ENCODE measurements at regions of chr3 and their contacts with region 1.

Region 1: DNA sequence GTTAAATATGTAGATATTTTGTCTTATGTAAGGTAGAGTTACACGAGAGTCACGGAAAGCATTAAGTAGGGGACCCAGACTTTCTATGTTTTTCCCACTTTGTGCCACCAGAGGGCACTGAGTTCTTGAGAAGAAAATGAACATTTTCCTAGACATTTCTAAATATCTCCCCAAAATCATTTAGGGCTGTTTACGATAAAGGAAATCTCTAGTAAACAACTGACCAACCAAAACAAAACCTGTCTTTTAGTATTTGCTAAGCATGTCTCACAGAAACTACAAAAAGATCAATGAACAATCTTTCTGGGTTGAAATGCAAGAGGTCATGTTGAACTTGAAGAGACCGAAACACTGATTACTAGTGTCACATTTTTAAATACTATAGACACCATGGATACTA is 16.1 kb downstream of the POU1F1 start:
- DNase-seq: no peak
- ATAC-seq: peak; percentile 74
- H3K4me3 ChIP-seq: no peak overlapping the region
- H3K27ac ChIP-seq: no peak overlapping the region
- H3K4me1 ChIP-seq: no peaks in the 10 kb centered on the region
- H3K27me3 ChIP-seq: no peaks in the 10 kb centered on the region
- CTCF ChIP-seq: peak; percentile 58 to 66 (median 63)
- EP300 ChIP-seq: no peak
- POLR2A ChIP-seq: no peak
- RAD21 ChIP-seq: peak; percentile 50

Region 2: GRCh38 chr3:87227104-87227834 is 33.0 kb before region 1 on chr3 and contains the start of gene CHMP2B:
- CTCF ChIA-PET with region 1: interaction called, 20 read pairs
- POLR2A ChIA-PET with region 1: no interaction called
- RAD21 ChIA-PET with region 1: no interaction called
- SMC1A ChIA-PET with region 1: no interaction called
- in situ Hi-C with region 1: no loop called
- intact Hi-C with region 1: no loop called
- DNase-seq: peak; percentile 51
- ATAC-seq: peak; percentile 96
- H3K4me3 ChIP-seq: peak within 1 kb of the TSS; percentile 87
- H3K27ac ChIP-seq: peak within 1 kb of the TSS; percentile 82
- H3K4me1 ChIP-seq: no peaks in the 10 kb centered on the region; the same call in 1 of the 2 replicates
- H3K27me3 ChIP-seq: no peaks in the 10 kb centered on the region
- CTCF ChIP-seq: no peak
- EP300 ChIP-seq: no peak; a peak in 1 of 4 replicates
- POLR2A ChIP-seq: peak; percentile 85
- RAD21 ChIP-seq: no peak
- polyA plus RNA-seq, gene CHMP2B: 15.7 to 22.5 TPM

Region 3: DNA sequence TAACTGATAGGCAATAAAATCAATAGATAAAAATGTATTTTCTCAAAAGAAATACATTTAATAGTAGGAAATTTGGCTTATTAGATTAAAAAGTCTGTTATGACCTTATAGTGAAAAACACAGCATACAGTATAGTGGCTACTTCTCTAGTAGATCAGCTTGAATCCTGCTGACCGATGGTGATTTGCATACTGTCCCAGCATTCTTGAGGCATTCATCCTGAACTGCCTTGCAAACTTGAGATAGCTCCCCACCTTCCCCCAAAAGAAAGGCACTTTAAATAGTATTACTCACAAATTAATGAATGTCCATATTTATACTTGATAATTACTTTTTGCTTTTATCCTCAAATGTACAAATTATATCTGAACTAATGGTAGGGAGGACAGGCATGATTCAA is 26.5 kb before region 1 on chr3:
- CTCF ChIA-PET with region 1: interaction called, 12 read pairs
- POLR2A ChIA-PET with region 1: no interaction called
- RAD21 ChIA-PET with region 1: no interaction called
- SMC1A ChIA-PET with region 1: interaction called, 6 read pairs
- in situ Hi-C with region 1: no loop called
- intact Hi-C with region 1: no loop called
- DNase-seq: no peak
- ATAC-seq: no peak
- H3K4me3 ChIP-seq: no peak overlapping the region
- H3K27ac ChIP-seq: no peak overlapping the region
- H3K4me1 ChIP-seq: no peaks in the 10 kb centered on the region
- H3K27me3 ChIP-seq: no peaks in the 10 kb centered on the region
- CTCF ChIP-seq: no peak
- EP300 ChIP-seq: no peak
- POLR2A ChIP-seq: no peak
- RAD21 ChIP-seq: no peak

Region 4: GRCh38 chr3:87247430-87247773 is 12.9 kb before region 1 on chr3:
- CTCF ChIA-PET with region 1: interaction called, 20 read pairs
- POLR2A ChIA-PET with region 1: no interaction called
- RAD21 ChIA-PET with region 1: no interaction called
- SMC1A ChIA-PET with region 1: interaction called, 4 read pairs
- in situ Hi-C with region 1: no loop called
- intact Hi-C with region 1: no loop called
- DNase-seq: no peak
- ATAC-seq: no peak
- H3K4me3 ChIP-seq: no peak overlapping the region
- H3K27ac ChIP-seq: no peak overlapping the region
- H3K4me1 ChIP-seq: no peaks in the 10 kb centered on the region
- H3K27me3 ChIP-seq: no peaks in the 10 kb centered on the region
- CTCF ChIP-seq: no peak
- EP300 ChIP-seq: no peak
- POLR2A ChIP-seq: no peak
- RAD21 ChIP-seq: no peak

Region 5: DNA sequence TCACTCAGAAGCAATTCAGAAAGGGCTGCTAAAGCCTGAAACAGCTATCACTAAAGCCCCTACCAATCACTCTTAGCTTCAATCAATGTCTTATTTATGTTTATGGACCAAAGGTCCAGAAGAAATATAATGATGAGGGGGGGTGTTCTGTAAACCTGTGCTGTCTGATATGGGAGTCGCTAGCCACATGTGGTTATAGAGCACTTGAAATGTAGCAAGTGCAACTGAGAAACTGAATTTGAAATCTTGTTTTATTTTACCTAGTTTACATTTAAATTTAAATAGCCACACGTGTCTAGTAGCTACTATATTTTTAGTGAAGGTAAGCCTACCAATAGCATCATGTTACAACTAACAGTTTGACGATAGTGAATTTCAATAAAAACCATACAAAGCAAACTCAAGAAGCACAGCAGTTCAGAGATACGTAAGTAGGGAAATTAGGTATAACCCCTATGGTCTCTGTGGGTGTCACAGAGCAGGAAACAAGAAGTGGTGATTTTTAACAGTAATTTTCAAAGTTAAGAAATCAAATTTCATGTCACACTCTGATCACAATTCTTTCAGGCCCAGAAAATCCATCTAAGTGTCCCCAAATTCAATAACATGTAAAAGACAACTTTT is 12.6 kb after region 1 on chr3:
- CTCF ChIA-PET with region 1: interaction called, 11 read pairs
- POLR2A ChIA-PET with region 1: no interaction called
- RAD21 ChIA-PET with region 1: no interaction called
- SMC1A ChIA-PET with region 1: interaction called, 3 read pairs
- in situ Hi-C with region 1: no loop called
- intact Hi-C with region 1: no loop called
- DNase-seq: no peak
- ATAC-seq: peak; percentile 80
- H3K4me3 ChIP-seq: no peak overlapping the region
- H3K27ac ChIP-seq: no peak overlapping the region
- H3K4me1 ChIP-seq: no peaks in the 10 kb centered on the region
- H3K27me3 ChIP-seq: no peaks in the 10 kb centered on the region
- CTCF ChIP-seq: no peak
- EP300 ChIP-seq: no peak
- POLR2A ChIP-seq: no peak
- RAD21 ChIP-seq: no peak

Region 6: DNA sequence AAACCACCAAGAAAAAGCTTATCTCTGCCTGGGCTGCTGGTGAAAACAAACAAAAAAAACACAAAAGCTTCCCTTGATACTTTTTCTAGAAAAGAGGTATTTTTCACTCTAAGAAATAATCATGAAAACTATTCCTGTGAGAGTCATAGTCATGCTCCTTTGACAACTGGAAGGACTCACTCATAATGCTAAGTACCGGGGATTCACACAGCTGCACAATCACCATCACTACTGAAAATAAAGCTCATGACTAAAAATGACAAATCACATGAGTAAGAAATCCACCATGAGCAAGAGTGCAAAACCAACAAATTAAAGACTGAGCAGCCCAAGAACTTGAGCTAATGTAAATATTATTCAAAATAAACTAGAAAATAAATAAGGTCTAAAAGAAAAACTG is 26.7 kb after region 1 on chr3:
- CTCF ChIA-PET with region 1: interaction called, 10 read pairs
- POLR2A ChIA-PET with region 1: no interaction called
- RAD21 ChIA-PET with region 1: no interaction called
- SMC1A ChIA-PET with region 1: interaction called, 3 read pairs
- in situ Hi-C with region 1: no loop called
- intact Hi-C with region 1: no loop called
- DNase-seq: no peak
- ATAC-seq: peak; percentile 51
- H3K4me3 ChIP-seq: no peak overlapping the region
- H3K27ac ChIP-seq: no peak overlapping the region
- H3K4me1 ChIP-seq: no peaks in the 10 kb centered on the region
- H3K27me3 ChIP-seq: no peaks in the 10 kb centered on the region
- CTCF ChIP-seq: no peak
- EP300 ChIP-seq: no peak
- POLR2A ChIP-seq: no peak
- RAD21 ChIP-seq: no peak

Measured in GM12878 (cell line).